ENCODE measurements at regions of chr10 and their contacts with region 1.

Region 1: DNA sequence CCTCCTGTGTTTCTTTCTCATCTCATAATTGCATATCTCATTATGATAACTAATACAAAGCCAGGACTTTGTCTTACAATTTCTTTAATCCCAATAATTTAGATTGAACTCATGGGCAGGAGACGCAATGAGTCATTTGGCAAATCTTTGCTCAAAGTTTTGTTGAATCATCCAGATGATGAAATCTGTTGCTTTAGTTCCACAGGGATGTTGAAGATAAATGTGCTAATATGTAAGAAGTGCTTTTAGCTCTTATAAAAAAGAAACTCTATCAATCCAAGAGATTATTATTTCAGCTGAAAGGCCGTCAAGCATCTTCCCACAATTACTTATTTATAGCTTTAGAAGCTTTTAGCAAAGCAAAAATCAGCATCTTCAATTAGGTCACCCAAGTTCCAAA is 36.7 kb upstream of the ANK3 start:
- DNase-seq: peak; percentile 82
- H3K4me3 ChIP-seq: no peak overlapping the region
- H3K27ac ChIP-seq: peak overlapping the region; percentile 26
- H3K4me1 ChIP-seq: peaks cover 75% of the 10 kb centered on the region
- H3K27me3 ChIP-seq: no peaks in the 10 kb centered on the region
- CTCF ChIP-seq: no peak

Region 2: DNA sequence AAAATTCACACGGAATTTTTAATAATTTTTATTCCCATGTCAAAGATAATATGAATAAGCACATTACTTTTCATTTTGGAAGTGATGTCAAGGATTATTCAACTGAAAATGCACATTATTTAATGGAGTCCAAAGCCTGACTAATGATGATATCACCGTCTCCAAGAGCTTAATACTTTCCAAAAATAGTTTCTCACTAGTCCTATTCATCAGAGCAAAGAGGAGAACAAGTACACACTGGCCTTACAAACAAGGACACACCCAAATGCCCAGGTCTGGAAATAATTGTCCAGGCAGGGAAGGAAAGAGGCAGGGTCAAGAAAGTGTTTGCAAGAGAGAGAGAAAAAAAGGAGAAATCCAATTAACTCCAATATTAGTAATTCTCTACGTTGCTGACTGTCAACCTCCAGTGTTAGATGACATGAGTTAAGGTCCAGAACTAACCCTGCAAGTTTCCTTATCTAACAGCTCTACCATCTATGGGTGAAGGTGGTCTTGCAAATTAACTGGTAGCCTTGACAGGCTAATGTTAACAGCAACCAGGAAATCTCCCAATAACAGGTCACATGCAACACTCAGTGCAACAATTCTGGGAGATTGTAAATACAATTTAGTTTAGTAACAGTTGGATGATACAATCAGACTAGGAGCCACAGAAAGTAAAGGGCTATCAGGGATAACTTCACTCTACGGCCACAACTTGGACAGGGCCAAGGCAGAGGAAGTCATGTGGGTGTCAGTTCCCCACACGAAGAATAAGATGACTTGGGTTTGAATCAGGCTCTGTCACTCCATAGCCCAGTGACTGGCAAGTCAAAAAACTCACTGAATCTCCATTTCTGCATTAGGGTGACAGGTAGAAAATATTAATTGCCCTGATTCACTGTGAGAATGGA is 303.0 kb before region 1 on chr10:
- CTCF ChIA-PET with region 1: no interaction called
- dilution Hi-C with region 1: loop called (anchors 25 kb)
- in situ Hi-C with region 1: loop called in 1 of 2 experiments (anchors 10 kb)
- intact Hi-C with region 1: loop called (anchors 1 kb)
- DNase-seq: peak; percentile 95
- H3K4me3 ChIP-seq: no peak overlapping the region
- H3K27ac ChIP-seq: peak overlapping the region; percentile 79
- H3K4me1 ChIP-seq: peaks cover 16% of the 10 kb centered on the region
- H3K27me3 ChIP-seq: no peaks in the 10 kb centered on the region
- CTCF ChIP-seq: no peak

Region 3: GRCh38 chr10:60384708-60385398 is 41.5 kb before region 1 on chr10:
- CTCF ChIA-PET with region 1: no interaction called
- dilution Hi-C with region 1: no loop called
- in situ Hi-C with region 1: no loop called
- intact Hi-C with region 1: loop called (anchors 2 kb)
- DNase-seq: peak; percentile 90
- H3K4me3 ChIP-seq: no peak overlapping the region
- H3K27ac ChIP-seq: peak overlapping the region; percentile 16
- H3K4me1 ChIP-seq: peaks cover 28% of the 10 kb centered on the region
- H3K27me3 ChIP-seq: no peaks in the 10 kb centered on the region
- CTCF ChIP-seq: no peak

Region 4: GRCh38 chr10:60414805-60415585 is 11.4 kb before region 1 on chr10:
- CTCF ChIA-PET with region 1: no interaction called
- dilution Hi-C with region 1: no loop called
- in situ Hi-C with region 1: no loop called
- intact Hi-C with region 1: loop called (anchors 2 kb)
- DNase-seq: peak; percentile 95
- H3K4me3 ChIP-seq: no peak overlapping the region
- H3K27ac ChIP-seq: no peak overlapping the region
- H3K4me1 ChIP-seq: peaks cover 37% of the 10 kb centered on the region
- H3K27me3 ChIP-seq: no peaks in the 10 kb centered on the region
- CTCF ChIP-seq: no peak

Region 5: GRCh38 chr10:60480865-60481563 is 54.6 kb after region 1 on chr10:
- CTCF ChIA-PET with region 1: no interaction called
- dilution Hi-C with region 1: no loop called
- in situ Hi-C with region 1: no loop called
- intact Hi-C with region 1: no loop called
- DNase-seq: peak; percentile 86
- H3K4me3 ChIP-seq: no peak overlapping the region
- H3K27ac ChIP-seq: peak overlapping the region; percentile 33
- H3K4me1 ChIP-seq: peaks cover 13% of the 10 kb centered on the region
- H3K27me3 ChIP-seq: no peaks in the 10 kb centered on the region
- CTCF ChIP-seq: no peak

Region 6: GRCh38 chr10:60513281-60513680 is 86.9 kb after region 1 on chr10:
- CTCF ChIA-PET with region 1: no interaction called
- dilution Hi-C with region 1: no loop called
- in situ Hi-C with region 1: no loop called
- intact Hi-C with region 1: no loop called
- DNase-seq: no peak
- H3K4me3 ChIP-seq: no peak overlapping the region
- H3K27ac ChIP-seq: no peak overlapping the region
- H3K4me1 ChIP-seq: no peaks in the 10 kb centered on the region
- H3K27me3 ChIP-seq: no peaks in the 10 kb centered on the region
- CTCF ChIP-seq: no peak

Region 7: DNA sequence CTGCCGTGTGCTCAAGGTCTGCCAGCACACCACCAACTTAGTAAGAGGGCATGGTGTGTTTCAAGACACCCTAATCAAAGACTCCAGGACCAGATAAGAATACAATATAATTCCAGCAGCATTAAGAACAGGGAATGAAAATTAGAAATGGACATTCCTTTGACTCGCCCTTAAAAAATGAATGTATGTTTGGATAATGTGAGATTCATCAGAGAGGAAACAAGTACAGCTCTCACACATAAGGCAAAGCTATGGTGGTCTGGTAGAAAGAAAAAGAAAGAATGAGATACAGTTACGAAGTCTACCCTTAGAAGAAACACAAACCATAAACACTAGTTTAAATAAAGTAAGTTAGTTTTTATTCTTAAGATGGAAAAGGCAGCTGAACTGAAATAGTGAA is 138.1 kb after region 1 on chr10:
- CTCF ChIA-PET with region 1: no interaction called
- dilution Hi-C with region 1: no loop called
- in situ Hi-C with region 1: no loop called
- intact Hi-C with region 1: no loop called
- DNase-seq: no peak
- H3K4me3 ChIP-seq: no peak overlapping the region
- H3K27ac ChIP-seq: no peak overlapping the region
- H3K4me1 ChIP-seq: no peaks in the 10 kb centered on the region
- H3K27me3 ChIP-seq: no peaks in the 10 kb centered on the region
- CTCF ChIP-seq: no peak

Region 8: GRCh38 chr10:60576130-60577069 is 150.0 kb after region 1 on chr10:
- CTCF ChIA-PET with region 1: no interaction called
- dilution Hi-C with region 1: no loop called
- in situ Hi-C with region 1: no loop called
- intact Hi-C with region 1: no loop called
- DNase-seq: no peak
- H3K4me3 ChIP-seq: no peak overlapping the region
- H3K27ac ChIP-seq: no peak overlapping the region
- H3K4me1 ChIP-seq: peaks cover 4% of the 10 kb centered on the region
- H3K27me3 ChIP-seq: no peaks in the 10 kb centered on the region
- CTCF ChIP-seq: no peak